AG04450 (cell line): ENCODE measurements at regions of chr9 and their contacts with region 1.

Region 1: GRCh38 chr9:98860871-98861293 is 53.4 kb downstream of the GALNT12 start:
- DNase-seq: peak; percentile 77
- H3K4me3 ChIP-seq: no peak overlapping the region
- H3K27ac ChIP-seq: no peak overlapping the region
- H3K27me3 ChIP-seq: peaks cover 6% of the 10 kb centered on the region
- CTCF ChIP-seq: peak; percentile 67

Region 2: GRCh38 chr9:98848450-98849149 is 12.3 kb before region 1 on chr9:
- CTCF ChIA-PET with region 1: interaction called, 32 read pairs
- POLR2A ChIA-PET with region 1: no interaction called
- DNase-seq: peak; percentile 90
- H3K4me3 ChIP-seq: peak overlapping the region; percentile 11
- H3K27ac ChIP-seq: peak overlapping the region; percentile 32
- H3K27me3 ChIP-seq: peaks cover 15% of the 10 kb centered on the region
- CTCF ChIP-seq: peak; percentile 96

Region 3: GRCh38 chr9:98958271-98958984 is 97.5 kb after region 1 on chr9:
- CTCF ChIA-PET with region 1: interaction called, 10 read pairs
- POLR2A ChIA-PET with region 1: interaction called, 3 read pairs
- DNase-seq: peak; percentile 94
- H3K4me3 ChIP-seq: no peak overlapping the region; the same call in 1 of the 2 replicates
- H3K27ac ChIP-seq: peak overlapping the region; percentile 90
- H3K27me3 ChIP-seq: no peaks in the 10 kb centered on the region
- CTCF ChIP-seq: 0 out of 2 replicates have a peak, but pooled peaks have one; percentile 14

Region 4: DNA sequence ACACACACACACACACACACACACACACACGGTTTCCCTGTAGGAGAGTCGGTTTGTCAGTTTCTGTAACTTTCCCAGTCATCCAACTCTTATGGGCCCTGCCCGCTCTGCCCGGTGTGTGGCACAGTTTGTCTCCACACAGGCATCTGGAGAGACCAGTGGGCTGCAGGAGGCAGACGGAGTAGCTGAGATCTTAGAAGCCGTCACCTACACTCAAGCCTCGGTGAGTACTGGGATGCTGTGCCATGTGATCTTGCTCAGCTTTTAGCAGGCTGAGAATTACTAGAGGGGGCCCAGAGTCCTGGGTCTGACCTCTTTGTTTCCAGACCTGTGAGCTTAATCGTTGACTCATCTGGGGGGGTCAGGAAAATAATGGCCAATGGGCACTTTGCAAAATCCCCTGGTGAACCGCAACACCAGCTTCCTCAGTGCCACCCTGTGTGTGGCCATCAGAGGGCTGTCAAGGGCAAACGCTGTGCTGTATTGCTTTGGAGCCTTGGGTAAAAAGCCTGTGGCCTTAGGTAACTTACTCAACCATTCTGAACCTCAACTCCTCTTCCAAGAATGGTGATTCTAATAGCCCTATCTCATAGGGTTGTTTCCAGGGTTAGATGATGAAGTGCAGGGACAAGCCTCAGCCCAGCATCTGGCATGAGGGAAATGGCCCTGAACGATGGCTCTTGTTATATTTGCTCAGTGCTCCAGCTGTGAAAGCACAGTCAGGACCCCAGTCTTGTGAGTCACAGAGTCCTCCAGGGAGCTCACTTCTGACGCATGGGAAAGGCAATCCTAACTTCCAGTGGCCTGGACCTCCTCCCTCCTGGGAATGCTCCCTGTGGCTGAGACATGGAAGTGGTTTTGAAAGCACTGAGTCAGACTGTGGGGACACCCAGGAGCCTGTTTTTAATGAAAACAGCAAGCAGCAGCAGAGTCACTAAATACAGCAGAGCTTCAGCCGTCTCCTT is 128.4 kb after region 1 on chr9:
- CTCF ChIA-PET with region 1: interaction called, 13 read pairs
- POLR2A ChIA-PET with region 1: no interaction called
- DNase-seq: peak; percentile 94
- H3K4me3 ChIP-seq: no peak overlapping the region
- H3K27ac ChIP-seq: peak overlapping the region; percentile 78
- H3K27me3 ChIP-seq: peaks cover 8% of the 10 kb centered on the region
- CTCF ChIP-seq: peak; percentile 32

Region 5: GRCh38 chr9:99104459-99105151 is 243.7 kb after region 1 on chr9 and contains the start of gene TGFBR1:
- CTCF ChIA-PET with region 1: interaction called, 10 read pairs
- POLR2A ChIA-PET with region 1: no interaction called
- DNase-seq: no peak
- H3K4me3 ChIP-seq: peak within 1 kb of the TSS; percentile 73
- H3K27ac ChIP-seq: peak within 1 kb of the TSS; percentile 89
- H3K27me3 ChIP-seq: no peaks in the 10 kb centered on the region
- CTCF ChIP-seq: 0 out of 2 replicates have a peak, but pooled peaks have one; percentile 5
- polyA plus RNA-seq, gene TGFBR1: 86.3 and 96.6 TPM in 2 replicates

Region 6: GRCh38 chr9:99140685-99141314 is 279.9 kb after region 1 on chr9:
- CTCF ChIA-PET with region 1: interaction called, 51 read pairs
- POLR2A ChIA-PET with region 1: no interaction called
- DNase-seq: peak; percentile 34
- H3K4me3 ChIP-seq: no peak overlapping the region
- H3K27ac ChIP-seq: no peak overlapping the region
- H3K27me3 ChIP-seq: no peaks in the 10 kb centered on the region
- CTCF ChIP-seq: peak; percentile 92

Region 7: DNA sequence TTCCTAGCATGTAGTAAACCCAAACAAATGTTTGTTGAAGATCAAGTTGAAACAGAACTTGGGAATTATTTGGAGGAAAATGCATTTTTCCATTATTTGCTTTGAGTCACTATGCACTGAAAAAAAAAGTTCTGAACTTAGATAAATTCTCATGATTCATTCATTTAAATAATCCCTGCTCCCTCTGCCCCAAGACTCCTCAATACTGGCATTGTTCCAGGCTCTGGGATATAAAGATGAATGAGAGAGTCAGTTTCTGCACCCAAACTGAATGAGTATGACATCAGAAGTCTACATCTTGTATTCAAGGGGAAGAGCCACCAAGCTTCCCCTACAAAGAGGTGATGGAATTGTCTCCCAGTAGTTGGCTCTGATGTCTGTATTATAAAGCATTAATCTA is 485.1 kb after region 1 on chr9:
- CTCF ChIA-PET with region 1: no interaction called
- POLR2A ChIA-PET with region 1: no interaction called
- DNase-seq: no peak
- H3K4me3 ChIP-seq: no peak overlapping the region
- H3K27ac ChIP-seq: no peak overlapping the region
- H3K27me3 ChIP-seq: no peaks in the 10 kb centered on the region
- CTCF ChIP-seq: no peak